Mammary epithelial cell (primary cell): ENCODE measurements at regions of chr3 and their contacts with region 1.

Region 1: GRCh38 chr3:42012935-42013690 is 51.2 kb upstream of the ULK4 start:
- DNase-seq: peak; percentile 65
- H3K4me3 ChIP-seq: peak overlapping the region; percentile 51 to 91 (median 85)
- H3K27ac ChIP-seq: peak overlapping the region; percentile 20
- H3K4me1 ChIP-seq: peaks cover 15% of the 10 kb centered on the region
- H3K27me3 ChIP-seq: no peaks in the 10 kb centered on the region
- CTCF ChIP-seq: no peak

Region 2: DNA sequence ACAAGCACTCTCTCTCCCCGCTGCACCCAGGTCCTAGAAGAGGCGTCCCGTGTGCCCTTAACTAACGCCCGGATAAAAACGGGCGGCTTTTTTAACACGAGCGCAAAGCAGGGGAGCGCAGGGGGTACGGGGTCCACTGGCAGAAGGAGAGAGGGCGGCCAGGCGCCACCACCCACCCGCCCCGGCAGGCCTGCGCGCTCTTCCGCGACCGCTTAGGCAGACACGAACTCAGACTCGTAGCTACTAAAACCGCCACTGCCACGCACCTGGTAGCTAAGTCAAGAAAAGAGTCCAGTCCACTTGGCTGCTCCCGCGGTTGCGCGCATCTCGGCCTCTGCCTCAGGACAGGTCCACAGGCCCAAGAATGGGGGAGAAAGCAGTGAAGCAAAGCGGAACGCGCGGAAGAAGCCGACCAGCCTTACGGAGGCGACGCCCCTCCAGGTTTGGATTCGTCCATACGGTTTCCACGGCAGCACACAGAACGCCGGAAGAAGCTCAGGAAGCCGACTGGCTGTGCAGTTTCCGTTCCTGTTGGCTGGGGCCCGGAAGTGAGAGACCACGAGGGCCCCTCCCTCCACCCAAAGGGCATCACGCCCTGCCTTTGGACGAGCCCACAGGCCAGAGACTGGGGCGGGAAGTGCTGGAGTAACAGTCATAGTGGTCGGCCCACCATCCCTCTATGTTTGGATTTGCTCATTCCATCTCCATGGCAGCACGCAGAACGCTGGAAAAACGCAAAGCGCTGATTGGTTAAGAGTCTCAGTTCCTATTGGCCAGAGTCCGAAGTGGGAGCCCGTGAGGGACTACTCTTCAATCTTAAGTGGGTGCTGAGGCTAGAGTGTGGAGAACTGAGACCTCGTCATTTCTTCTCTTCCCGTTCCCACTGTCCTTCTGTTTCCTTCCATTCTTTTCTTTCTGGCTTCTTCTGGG is 51.1 kb before region 1 on chr3 and contains the start of gene ULK4:
- CTCF ChIA-PET with region 1: interaction called, 3 read pairs
- dilution Hi-C with region 1: no loop called
- in situ Hi-C with region 1: no loop called
- intact Hi-C with region 1: loop called (anchors 1 kb)
- DNase-seq: peak; percentile 100
- H3K4me3 ChIP-seq: peak within 1 kb of the TSS; percentile 73 to 82 (median 75)
- H3K27ac ChIP-seq: peak within 1 kb of the TSS; percentile 93
- H3K4me1 ChIP-seq: peaks cover 4% of the 10 kb centered on the region
- H3K27me3 ChIP-seq: no peaks in the 10 kb centered on the region
- CTCF ChIP-seq: no peak
- total RNA-seq, gene ULK4: 5.3 to 9.2 TPM

Region 3: DNA sequence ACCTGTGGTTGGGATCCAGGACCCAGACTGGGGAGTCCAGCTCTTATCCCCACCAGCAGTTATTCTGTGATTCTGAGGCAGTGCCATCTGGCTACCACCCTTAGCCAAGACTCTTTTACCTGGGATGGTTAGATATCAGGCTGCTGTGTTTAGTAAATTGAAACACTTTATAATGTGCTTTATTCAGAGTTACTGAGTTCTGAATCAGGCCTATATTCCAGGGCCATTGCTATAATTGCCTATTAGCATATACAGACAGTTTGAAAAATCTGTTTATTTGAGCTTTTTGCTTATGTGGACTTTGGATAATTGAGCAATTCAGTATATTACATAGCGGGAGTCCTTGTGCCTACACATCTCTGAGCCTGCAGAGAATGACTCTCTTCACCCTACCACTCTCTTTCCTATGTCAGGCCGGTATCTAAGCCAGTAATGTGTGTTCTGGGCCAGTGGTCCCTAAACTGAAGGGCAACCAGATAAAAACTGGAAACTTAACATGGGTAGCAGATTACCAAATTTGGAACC is 32.7 kb after region 1 on chr3:
- CTCF ChIA-PET with region 1: no interaction called
- dilution Hi-C with region 1: loop called (anchors 5 kb)
- in situ Hi-C with region 1: no loop called
- intact Hi-C with region 1: no loop called
- DNase-seq: no peak
- H3K4me3 ChIP-seq: no peak overlapping the region
- H3K27ac ChIP-seq: no peak overlapping the region
- H3K4me1 ChIP-seq: peaks cover 27% of the 10 kb centered on the region
- H3K27me3 ChIP-seq: no peaks in the 10 kb centered on the region
- CTCF ChIP-seq: no peak

Region 4: DNA sequence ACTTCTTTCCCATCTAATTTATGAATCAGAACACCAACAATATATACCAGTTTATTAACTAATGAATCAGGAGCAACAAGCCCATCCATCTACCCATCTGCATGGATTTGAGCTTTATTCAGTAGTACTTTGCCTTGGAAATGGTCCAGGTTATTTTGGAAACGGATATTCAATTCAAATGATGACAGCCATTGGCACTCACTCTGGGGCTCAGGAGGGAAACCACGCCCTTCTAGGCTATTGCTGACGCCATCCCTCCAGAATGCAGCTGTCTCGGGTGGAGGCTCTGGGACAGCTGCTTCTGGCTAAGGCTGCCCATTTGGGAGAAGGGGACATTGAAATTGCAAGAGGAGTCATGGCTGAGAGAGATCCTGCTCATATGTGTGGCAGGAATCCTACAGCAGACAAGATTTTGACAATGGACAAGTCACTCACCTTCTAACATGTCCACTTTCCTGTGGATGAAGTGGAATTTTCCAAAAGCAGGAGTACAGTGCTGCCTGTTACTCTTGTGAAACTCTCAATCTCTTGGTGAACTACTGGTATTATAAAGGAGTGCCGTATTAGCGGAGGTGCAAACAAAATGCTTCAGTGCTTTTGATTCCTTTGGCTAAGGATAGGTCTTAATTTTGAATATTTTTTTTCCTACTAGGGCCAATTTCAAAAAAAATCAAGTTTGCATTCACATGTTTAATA is 48.7 kb after region 1 on chr3:
- CTCF ChIA-PET with region 1: no interaction called
- dilution Hi-C with region 1: no loop called
- in situ Hi-C with region 1: no loop called
- intact Hi-C with region 1: loop called (anchors 2 kb)
- DNase-seq: peak; percentile 83
- H3K4me3 ChIP-seq: no peak overlapping the region
- H3K27ac ChIP-seq: peak overlapping the region; percentile 88
- H3K4me1 ChIP-seq: peaks cover 25% of the 10 kb centered on the region
- H3K27me3 ChIP-seq: no peaks in the 10 kb centered on the region
- CTCF ChIP-seq: no peak

Region 5: DNA sequence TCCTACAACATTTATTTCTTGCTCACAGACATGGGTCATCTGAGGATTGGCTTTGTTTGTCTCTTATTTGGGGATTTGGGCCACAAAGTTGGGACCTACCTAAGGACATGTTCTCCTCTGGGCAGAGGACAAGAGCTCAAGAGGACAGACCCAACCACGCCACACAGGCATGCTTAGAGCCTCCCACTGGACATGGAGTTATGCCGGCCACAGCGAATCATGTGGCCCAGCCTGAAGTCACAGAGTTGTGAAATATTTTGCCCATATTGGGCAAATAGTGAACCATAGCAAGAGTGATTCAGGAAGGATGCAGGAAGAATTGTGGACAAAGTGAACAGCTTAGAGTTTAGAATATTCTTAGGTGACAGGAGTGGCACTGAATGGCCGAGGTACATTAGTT is 87.9 kb after region 1 on chr3:
- CTCF ChIA-PET with region 1: interaction called, 3 read pairs
- dilution Hi-C with region 1: loop called (anchors 5 kb)
- in situ Hi-C with region 1: loop called in 1 of 2 experiments (anchors 10 kb)
- intact Hi-C with region 1: loop called (anchors 1 kb)
- DNase-seq: peak; percentile 72
- H3K4me3 ChIP-seq: no peak overlapping the region
- H3K27ac ChIP-seq: no peak overlapping the region
- H3K4me1 ChIP-seq: peaks cover 37% of the 10 kb centered on the region
- H3K27me3 ChIP-seq: no peaks in the 10 kb centered on the region
- CTCF ChIP-seq: no peak